ENCODE measurements at regions of chr1 and their contacts with region 1.

Region 1: GRCh38 chr1:233304489-233305102 is 9.1 kb upstream of the PCNX2 start:
- DNase-seq: no peak
- ATAC-seq: no peak
- H3K4me3 Mint-ChIP-seq: no peak overlapping the region
- H3K27ac Mint-ChIP-seq: no peak overlapping the region
- H3K4me1 Mint-ChIP-seq: no peaks in the 10 kb centered on the region
- H3K27me3 Mint-ChIP-seq: peaks cover 4% of the 10 kb centered on the region

Region 2: GRCh38 chr1:233315718-233316301 is 11.2 kb after region 1 on chr1:
- CTCF ChIA-PET with region 1: interaction called, 24 read pairs
- POLR2A ChIA-PET with region 1: no interaction called
- intact Hi-C with region 1: no loop called
- DNase-seq: no peak
- ATAC-seq: no peak
- H3K4me3 Mint-ChIP-seq: no peak overlapping the region
- H3K27ac Mint-ChIP-seq: no peak overlapping the region
- H3K4me1 Mint-ChIP-seq: no peaks in the 10 kb centered on the region
- H3K27me3 Mint-ChIP-seq: peaks cover 14% of the 10 kb centered on the region

Region 3: GRCh38 chr1:233364695-233365539 is 60.3 kb after region 1 on chr1:
- CTCF ChIA-PET with region 1: interaction called, 4 read pairs
- POLR2A ChIA-PET with region 1: no interaction called
- intact Hi-C with region 1: loop called in 1 of 2 experiments (anchors 2 kb)
- DNase-seq: no peak
- ATAC-seq: no peak
- H3K4me3 Mint-ChIP-seq: no peak overlapping the region
- H3K27ac Mint-ChIP-seq: no peak overlapping the region
- H3K4me1 Mint-ChIP-seq: no peaks in the 10 kb centered on the region
- H3K27me3 Mint-ChIP-seq: peaks cover 5% of the 10 kb centered on the region

Region 4: GRCh38 chr1:233424779-233425178 is 120.2 kb after region 1 on chr1:
- CTCF ChIA-PET with region 1: no interaction called
- POLR2A ChIA-PET with region 1: no interaction called
- intact Hi-C with region 1: loop called in 1 of 2 experiments (anchors 10 kb)
- DNase-seq: no peak
- ATAC-seq: no peak
- H3K4me3 Mint-ChIP-seq: no peak overlapping the region
- H3K27ac Mint-ChIP-seq: no peak overlapping the region
- H3K4me1 Mint-ChIP-seq: no peaks in the 10 kb centered on the region
- H3K27me3 Mint-ChIP-seq: peaks cover 28% of the 10 kb centered on the region

Region 5: GRCh38 chr1:233440951-233441401 is 136.4 kb after region 1 on chr1:
- CTCF ChIA-PET with region 1: interaction called, 9 read pairs
- POLR2A ChIA-PET with region 1: no interaction called
- intact Hi-C with region 1: loop called in 1 of 2 experiments (anchors 1 kb)
- DNase-seq: peak; percentile 7
- ATAC-seq: no peak
- H3K4me3 Mint-ChIP-seq: no peak overlapping the region
- H3K27ac Mint-ChIP-seq: no peak overlapping the region
- H3K4me1 Mint-ChIP-seq: no peaks in the 10 kb centered on the region
- H3K27me3 Mint-ChIP-seq: peaks cover 14% of the 10 kb centered on the region

Region 6: GRCh38 chr1:233790662-233791375 is 486.2 kb after region 1 on chr1:
- CTCF ChIA-PET with region 1: no interaction called
- POLR2A ChIA-PET with region 1: no interaction called
- intact Hi-C with region 1: loop called (anchors 1 to 10 kb)
- DNase-seq: peak; percentile 31
- ATAC-seq: peak; percentile 74
- H3K4me3 Mint-ChIP-seq: no peak overlapping the region
- H3K27ac Mint-ChIP-seq: no peak overlapping the region
- H3K4me1 Mint-ChIP-seq: no peaks in the 10 kb centered on the region
- H3K27me3 Mint-ChIP-seq: peaks cover 20% of the 10 kb centered on the region

Region 7: DNA sequence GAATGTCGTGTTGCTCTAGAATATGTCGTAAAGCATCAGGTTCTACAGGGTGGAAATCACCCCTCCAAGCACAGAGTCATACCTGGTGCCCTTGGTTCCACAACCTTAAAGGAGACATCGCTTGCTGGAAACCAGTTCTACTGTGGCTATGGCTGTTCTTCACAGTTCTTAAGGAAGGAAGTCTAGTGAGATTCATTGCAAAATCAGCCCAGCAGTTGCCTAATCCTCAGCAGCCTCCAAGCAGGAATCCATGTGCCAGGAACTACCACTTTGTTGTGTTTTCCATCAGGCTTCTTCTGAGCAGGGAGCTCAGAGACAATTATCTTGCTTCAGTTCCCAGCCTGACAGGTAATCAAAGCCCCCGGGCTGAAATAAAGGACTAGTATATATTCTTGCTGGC is 554.9 kb after region 1 on chr1:
- CTCF ChIA-PET with region 1: no interaction called
- POLR2A ChIA-PET with region 1: no interaction called
- intact Hi-C with region 1: no loop called
- DNase-seq: no peak
- ATAC-seq: no peak
- H3K4me3 Mint-ChIP-seq: no peak overlapping the region
- H3K27ac Mint-ChIP-seq: no peak overlapping the region
- H3K4me1 Mint-ChIP-seq: no peaks in the 10 kb centered on the region
- H3K27me3 Mint-ChIP-seq: peaks cover 16% of the 10 kb centered on the region

Region 8: DNA sequence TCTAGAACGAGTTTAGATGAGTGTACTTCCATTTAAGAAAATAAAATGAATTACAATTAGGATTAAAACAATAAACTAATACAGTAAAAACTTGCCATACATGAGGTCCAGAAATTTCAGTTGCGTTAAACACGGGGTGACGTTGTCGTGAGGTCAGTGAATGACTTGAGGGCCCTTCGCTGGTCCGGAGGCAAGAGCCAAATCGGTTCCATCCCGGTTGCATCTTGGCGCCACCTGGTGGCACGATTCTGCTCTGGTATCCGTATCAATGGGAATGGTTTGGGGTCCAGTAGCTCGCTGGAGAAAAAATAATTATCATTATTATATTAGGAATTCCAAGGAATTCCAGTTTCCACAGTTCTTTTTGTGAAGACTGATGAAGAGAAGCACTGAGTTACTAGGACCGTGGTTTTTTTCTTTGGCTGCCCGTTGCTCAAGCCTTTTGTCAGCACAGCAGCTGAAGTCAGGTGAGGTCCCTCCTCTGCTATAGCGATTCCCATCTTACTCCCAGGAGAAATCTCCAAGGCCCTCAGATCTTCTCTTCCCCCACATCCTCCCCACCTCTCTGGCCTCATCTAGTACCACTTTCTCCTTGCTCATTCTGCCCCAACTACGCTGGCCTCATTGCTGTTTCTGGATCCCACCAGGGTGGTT is 761.3 kb after region 1 on chr1:
- CTCF ChIA-PET with region 1: interaction called, 10 read pairs
- POLR2A ChIA-PET with region 1: no interaction called
- intact Hi-C with region 1: loop called (anchors 1 to 5 kb)
- DNase-seq: peak; percentile 84
- ATAC-seq: peak; percentile 47
- H3K4me3 Mint-ChIP-seq: no peak overlapping the region
- H3K27ac Mint-ChIP-seq: no peak overlapping the region
- H3K4me1 Mint-ChIP-seq: no peaks in the 10 kb centered on the region
- H3K27me3 Mint-ChIP-seq: peaks cover 12% of the 10 kb centered on the region

Measured in activated CD4-positive, alpha-beta T cell treated with anti-CD3 and anti-CD28 coated beads for 36 hours (primary cell).